ENCODE measurements at regions of chr13 and their contacts with region 1.

Region 1: DNA sequence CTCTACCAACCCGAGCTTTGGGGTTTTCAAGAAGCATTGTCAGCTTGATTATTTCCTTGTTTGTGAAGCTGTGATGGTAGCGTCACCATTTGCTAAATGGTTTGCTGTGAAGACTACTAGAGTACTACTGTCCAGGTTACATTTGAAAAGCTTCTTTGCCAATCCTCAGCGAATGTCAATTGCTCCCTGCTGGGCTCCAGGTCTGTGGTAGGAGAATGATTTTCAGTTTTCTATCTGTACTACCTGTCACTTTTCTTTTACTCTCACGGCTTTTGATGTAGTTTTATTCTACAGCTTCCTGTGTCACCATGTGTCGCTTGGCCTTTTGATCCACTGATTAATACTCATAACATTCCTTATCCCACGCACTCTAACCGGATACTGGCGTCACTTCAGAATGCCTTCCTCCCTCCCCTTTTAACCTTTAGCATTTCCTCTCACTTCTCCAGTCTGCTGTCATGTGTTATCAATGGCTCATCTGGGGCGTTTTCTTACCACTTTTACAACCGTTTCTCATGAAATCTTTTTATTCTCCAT is 7.5 kb upstream of the GPR183 start:
- DNase-seq: peak in 7 of 14 experiments; percentile 26 to 92 (median 73)
- ATAC-seq: peak; percentile 83
- H3K4me3 ChIP-seq: peak overlapping the region; percentile 50
- H3K4me3 Mint-ChIP-seq: peak overlapping the region; percentile 61
- H3K27ac ChIP-seq: peak overlapping the region; percentile 88 to 89
- H3K27ac Mint-ChIP-seq: peak overlapping the region; percentile 89
- H3K4me1 ChIP-seq: peaks cover 72% of the 10 kb centered on the region
- H3K4me1 Mint-ChIP-seq: peaks cover 85% of the 10 kb centered on the region
- H3K27me3 ChIP-seq: no peaks in the 10 kb centered on the region
- H3K27me3 Mint-ChIP-seq: no peaks in the 10 kb centered on the region
- CTCF ChIP-seq: no peak

Region 2: DNA sequence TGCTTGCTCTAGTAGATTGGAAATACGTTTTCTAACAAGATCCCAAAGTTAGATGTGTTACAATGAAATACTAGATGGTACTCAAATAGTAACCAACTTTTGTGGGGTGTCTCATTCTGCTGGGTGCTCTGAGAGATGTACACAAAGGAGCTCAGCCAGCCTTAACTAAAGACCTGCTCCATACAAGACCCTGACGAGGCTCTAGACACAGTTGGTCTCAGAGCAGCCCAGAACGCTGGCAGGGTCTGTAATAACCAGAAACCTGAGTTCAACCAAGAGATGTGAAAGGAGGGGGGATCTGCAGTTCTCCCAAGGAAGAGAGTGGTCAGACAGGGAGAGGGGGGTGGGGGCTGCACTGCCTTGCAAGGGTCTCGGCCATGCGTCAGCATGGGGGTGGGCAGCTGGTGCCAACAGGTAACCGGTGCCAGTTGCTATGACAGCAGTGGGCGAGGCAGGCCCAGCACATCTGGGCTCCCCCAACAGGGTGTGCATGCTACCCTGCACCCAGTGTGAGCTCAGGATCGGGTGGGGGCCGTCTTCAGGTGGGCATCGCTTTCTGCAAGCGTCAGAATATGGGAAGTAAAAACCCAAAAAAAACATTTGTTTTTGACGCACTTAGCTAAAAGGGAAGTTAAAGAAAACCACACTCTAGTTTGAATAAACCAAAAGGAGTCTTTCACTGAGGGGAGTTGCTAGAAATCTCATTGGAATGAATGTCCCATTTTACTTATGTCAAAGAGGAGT is 60.5 kb after region 1 on chr13:
- CTCF ChIA-PET with region 1: interaction called, 3 read pairs
- POLR2A ChIA-PET with region 1: interaction called, 63 read pairs
- intact Hi-C with region 1: no loop called
- DNase-seq: peak in 11 of 14 experiments; percentile 44 to 92 (median 70)
- ATAC-seq: peak; percentile 86
- H3K4me3 ChIP-seq: no peak overlapping the region
- H3K4me3 Mint-ChIP-seq: peak overlapping the region; percentile 8
- H3K27ac ChIP-seq: peak overlapping the region; percentile 58 to 75
- H3K27ac Mint-ChIP-seq: peak overlapping the region; percentile 97
- H3K4me1 ChIP-seq: peaks cover 74% of the 10 kb centered on the region
- H3K4me1 Mint-ChIP-seq: peaks cover 93% of the 10 kb centered on the region
- H3K27me3 ChIP-seq: no peaks in the 10 kb centered on the region
- H3K27me3 Mint-ChIP-seq: no peaks in the 10 kb centered on the region
- CTCF ChIP-seq: no peak